ENCODE measurements at regions of chr3 and their contacts with region 1.

Region 1: DNA sequence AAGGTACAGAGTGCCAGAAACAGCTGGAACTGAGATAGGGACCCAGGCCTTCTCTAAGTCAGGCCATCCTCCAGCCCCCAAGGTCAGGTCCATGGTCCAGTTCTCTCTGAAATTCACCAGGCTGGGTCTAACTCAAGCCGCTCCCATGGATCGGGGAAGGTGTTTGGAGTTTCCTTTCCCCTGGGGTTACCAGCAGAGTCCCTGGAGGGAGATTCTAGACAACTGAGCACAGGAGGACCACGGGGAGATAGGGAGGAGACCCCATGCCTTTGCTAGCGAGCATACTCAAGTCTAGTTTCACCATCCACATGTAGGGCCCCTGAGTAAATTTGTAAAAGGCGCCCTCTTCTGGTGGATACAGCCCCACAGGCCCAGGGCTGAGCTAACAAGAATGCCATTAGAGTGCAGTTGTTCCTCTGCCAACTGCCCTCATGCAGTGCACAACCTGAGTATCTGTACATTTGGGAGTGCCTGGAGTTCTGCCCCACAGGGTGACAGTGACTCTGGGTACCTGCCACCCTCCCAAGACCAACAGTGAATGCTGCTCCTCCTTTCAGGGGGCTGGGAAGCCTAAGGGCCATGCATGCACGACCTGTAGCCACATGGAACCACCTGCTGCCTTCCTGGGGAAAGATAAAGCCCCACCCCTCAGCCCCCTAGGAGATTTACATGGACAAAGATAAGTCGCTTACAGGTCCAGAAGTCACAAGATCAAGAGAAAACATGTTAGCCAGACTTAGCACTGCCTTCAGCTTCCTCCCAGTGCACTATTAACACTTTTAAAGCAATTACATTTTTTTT is 89.0 kb downstream of the IQSEC1 start:
- DNase-seq: no peak
- H3K4me3 ChIP-seq: no peak overlapping the region
- H3K27ac ChIP-seq: no peak overlapping the region
- H3K27me3 ChIP-seq: peaks cover 7% of the 10 kb centered on the region
- CTCF ChIP-seq: peak; percentile 77

Region 2: DNA sequence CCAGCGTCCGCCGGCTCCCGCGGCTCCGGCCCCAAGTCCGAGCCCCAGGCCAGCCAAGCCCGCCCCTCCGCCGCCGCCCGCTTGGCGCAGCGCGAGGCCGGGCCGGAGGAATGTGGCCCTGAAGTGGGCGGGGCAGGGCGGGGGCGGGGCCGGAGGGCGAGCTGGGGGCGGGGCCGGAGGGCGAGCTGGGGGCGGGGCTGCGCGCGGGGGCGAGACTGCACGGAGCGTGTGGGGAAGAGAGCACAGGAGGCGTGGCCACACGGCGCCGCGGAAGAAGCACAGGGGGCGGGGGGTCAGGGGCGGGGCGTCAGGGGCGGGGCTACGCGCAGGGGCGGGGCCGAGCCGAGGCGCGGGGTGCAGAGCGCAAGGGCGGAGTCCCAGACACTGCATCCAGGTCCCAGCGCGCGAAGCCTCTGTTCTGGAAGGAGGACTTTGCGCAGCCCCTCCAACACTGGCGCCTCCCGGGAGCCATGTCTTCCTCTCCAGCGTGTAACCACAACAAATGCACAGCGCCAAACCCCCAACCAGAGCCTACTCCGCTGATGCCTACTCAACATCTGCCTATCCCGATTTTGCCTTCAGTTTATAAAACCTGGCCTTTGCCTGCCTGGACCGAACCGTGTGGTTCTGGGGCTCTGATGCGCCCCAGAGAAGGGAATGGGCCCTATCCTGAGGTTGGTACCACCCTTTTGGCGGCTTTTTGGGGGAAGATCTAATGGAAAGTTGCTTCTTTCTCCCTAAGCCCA is 16.4 kb before region 1 on chr3:
- CTCF ChIA-PET with region 1: interaction called, 26 read pairs
- POLR2A ChIA-PET with region 1: interaction called, 6 read pairs
- DNase-seq: peak; percentile 73
- H3K4me3 ChIP-seq: peak overlapping the region; percentile 81
- H3K27ac ChIP-seq: peak overlapping the region; percentile 11
- H3K27me3 ChIP-seq: peaks cover 17% of the 10 kb centered on the region
- CTCF ChIP-seq: no peak

Region 3: GRCh38 chr3:12973827-12974226 is 10.4 kb before region 1 on chr3:
- CTCF ChIA-PET with region 1: interaction called, 26 read pairs
- POLR2A ChIA-PET with region 1: no interaction called
- DNase-seq: no peak
- H3K4me3 ChIP-seq: no peak overlapping the region
- H3K27ac ChIP-seq: no peak overlapping the region
- H3K27me3 ChIP-seq: peaks cover 38% of the 10 kb centered on the region
- CTCF ChIP-seq: no peak